T-cell (primary cell): ENCODE measurements at regions of chr2 and their contacts with region 1.

Region 1: GRCh38 chr2:41337956-41338355 is 709.9 kb upstream of the PKDCC start:
- DNase-seq: no peak
- ATAC-seq: no peak
- H3K4me3 ChIP-seq: no peak overlapping the region
- H3K4me3 Mint-ChIP-seq: no peak overlapping the region
- H3K27ac ChIP-seq: no peak overlapping the region
- H3K27ac Mint-ChIP-seq: no peak overlapping the region
- H3K4me1 ChIP-seq: no peaks in the 10 kb centered on the region
- H3K4me1 Mint-ChIP-seq: no peaks in the 10 kb centered on the region
- H3K27me3 ChIP-seq: no peaks in the 10 kb centered on the region
- H3K27me3 Mint-ChIP-seq: peaks cover 0 to 5% of the 10 kb centered on the region in 2 donors

Region 2: GRCh38 chr2:41364032-41364431 is 26.1 kb after region 1 on chr2:
- CTCF ChIA-PET with region 1: interaction called in 1 of 2 experiments, 12 read pairs
- POLR2A ChIA-PET with region 1: no interaction called
- DNase-seq: no peak
- ATAC-seq: no peak
- H3K4me3 ChIP-seq: no peak overlapping the region
- H3K4me3 Mint-ChIP-seq: no peak overlapping the region
- H3K27ac ChIP-seq: no peak overlapping the region
- H3K27ac Mint-ChIP-seq: no peak overlapping the region
- H3K4me1 ChIP-seq: no peaks in the 10 kb centered on the region
- H3K4me1 Mint-ChIP-seq: no peaks in the 10 kb centered on the region
- H3K27me3 ChIP-seq: no peaks in the 10 kb centered on the region
- H3K27me3 Mint-ChIP-seq: peaks cover 0 to 4% of the 10 kb centered on the region in 2 donors

Region 3: DNA sequence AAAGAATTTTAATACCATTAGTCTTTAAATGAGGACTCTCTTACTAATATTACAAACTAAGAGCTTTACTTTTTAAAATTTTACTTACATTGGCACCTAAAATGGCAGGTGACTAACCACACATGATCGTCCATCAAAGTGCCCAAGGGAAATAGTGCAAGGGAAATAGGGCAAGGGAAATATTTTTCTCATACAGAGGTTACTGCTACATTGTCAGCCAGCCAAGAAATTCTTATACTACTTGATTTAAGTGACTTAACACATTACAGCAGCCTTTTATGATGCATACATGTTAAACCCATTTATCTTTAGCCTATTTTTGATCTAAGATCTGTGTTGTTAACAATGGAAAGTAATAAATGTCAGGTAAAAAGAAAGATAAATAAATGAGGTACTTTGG is 122.7 kb after region 1 on chr2:
- CTCF ChIA-PET with region 1: no interaction called
- POLR2A ChIA-PET with region 1: no interaction called
- DNase-seq: no peak
- ATAC-seq: no peak
- H3K4me3 ChIP-seq: no peak overlapping the region
- H3K4me3 Mint-ChIP-seq: no peak overlapping the region
- H3K27ac ChIP-seq: no peak overlapping the region
- H3K27ac Mint-ChIP-seq: no peak overlapping the region
- H3K4me1 ChIP-seq: no peaks in the 10 kb centered on the region
- H3K4me1 Mint-ChIP-seq: peaks cover 0 to 3% (median 2%) of the 10 kb centered on the region in 3 donors
- H3K27me3 ChIP-seq: no peaks in the 10 kb centered on the region
- H3K27me3 Mint-ChIP-seq: no peaks in the 10 kb centered on the region

Region 4: GRCh38 chr2:41869542-41870264 is 531.7 kb after region 1 on chr2:
- CTCF ChIA-PET with region 1: no interaction called
- POLR2A ChIA-PET with region 1: no interaction called
- DNase-seq: peak; percentile 17 to 85 (median 65)
- ATAC-seq: peak; percentile 65 to 79 (median 74)
- H3K4me3 ChIP-seq: no peak overlapping the region
- H3K4me3 Mint-ChIP-seq: no peak overlapping the region
- H3K27ac ChIP-seq: no peak overlapping the region
- H3K27ac Mint-ChIP-seq: peak overlapping the region in 1 of 2 donors; percentile 44
- H3K4me1 ChIP-seq: peaks cover 0 to 20% of the 10 kb centered on the region in 2 experiments
- H3K4me1 Mint-ChIP-seq: peaks cover 0 to 31% (median 7%) of the 10 kb centered on the region in 3 donors
- H3K27me3 ChIP-seq: peaks cover 0 to 25% of the 10 kb centered on the region in 2 experiments
- H3K27me3 Mint-ChIP-seq: peaks cover 0 to 7% of the 10 kb centered on the region in 2 donors